HepG2 (cell line): ENCODE measurements at regions of chr11 and their contacts with region 1.

Region 1: DNA sequence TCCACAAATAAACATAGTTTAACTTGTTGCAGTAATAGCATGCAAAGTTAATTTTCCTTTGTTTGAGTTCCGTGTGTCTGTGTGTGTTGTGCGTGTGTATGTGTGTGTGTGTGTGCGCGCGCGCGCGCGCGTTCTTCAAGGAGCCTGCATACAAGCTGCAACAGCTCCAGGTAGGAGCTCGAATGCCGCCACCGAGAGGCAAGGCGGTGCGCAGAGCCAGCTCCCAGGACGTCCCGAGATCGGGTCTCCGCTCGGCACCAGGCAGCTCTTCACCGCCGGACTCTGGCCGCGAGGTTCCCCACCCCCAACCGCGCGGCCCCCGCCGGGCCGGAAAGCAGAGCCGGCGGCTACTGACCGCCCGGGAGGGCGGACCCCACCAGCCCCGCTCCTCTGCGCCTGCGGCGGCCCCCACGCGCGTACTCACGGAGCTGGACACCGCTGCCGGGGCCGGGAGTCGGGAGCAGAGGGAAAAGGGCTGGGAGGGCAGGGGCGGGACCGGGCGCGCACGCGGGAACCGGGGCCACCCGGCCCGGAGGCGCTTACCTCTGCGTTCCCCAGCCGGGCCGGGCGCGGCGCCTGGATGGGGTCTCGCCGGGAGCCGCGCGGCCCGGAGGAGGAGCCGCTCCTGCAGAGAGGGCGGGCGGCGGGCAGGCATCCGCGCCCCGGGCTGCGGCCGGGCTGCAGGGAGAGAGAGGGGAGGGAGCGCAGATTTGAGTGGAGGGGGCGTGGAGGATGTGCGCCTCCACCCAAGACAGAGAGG is 40.4 kb upstream of the AKIP1 start:
- DNase-seq: no peak
- ATAC-seq: peak; percentile 86
- H3K4me3 ChIP-seq: peak overlapping the region; percentile 60 to 70 (median 64)
- H3K27ac ChIP-seq: no peak overlapping the region
- H3K4me1 ChIP-seq: peaks cover 26% of the 10 kb centered on the region
- H3K27me3 ChIP-seq: peaks cover 0 to 24% of the 10 kb centered on the region in 2 experiments; a peak in 3 of 5 replicates
- CTCF ChIP-seq: peak; percentile 31
- EP300 ChIP-seq: no peak
- POLR2A ChIP-seq: no peak
- RAD21 ChIP-seq: no peak

Region 2: GRCh38 chr11:8839957-8840945 is 30.3 kb before region 1 on chr11:
- CTCF ChIA-PET with region 1: no interaction called
- POLR2A ChIA-PET with region 1: no interaction called
- in situ Hi-C with region 1: no loop called
- intact Hi-C with region 1: loop called (anchors 2 kb)
- DNase-seq: peak; percentile 35
- ATAC-seq: peak; percentile 92
- H3K4me3 ChIP-seq: peak overlapping the region in 1 of 3 experiments; percentile 53; a peak in 2 of 6 replicates
- H3K27ac ChIP-seq: no peak overlapping the region
- H3K4me1 ChIP-seq: peaks cover 34% of the 10 kb centered on the region
- H3K27me3 ChIP-seq: peaks cover 0 to 22% of the 10 kb centered on the region in 2 experiments; a peak in 3 of 5 replicates
- CTCF ChIP-seq: no peak
- EP300 ChIP-seq: no peak
- POLR2A ChIP-seq: no peak
- RAD21 ChIP-seq: no peak